Endothelial cell of umbilical vein (primary cell): ENCODE measurements at regions of chr5 and their contacts with region 1.

Region 1: DNA sequence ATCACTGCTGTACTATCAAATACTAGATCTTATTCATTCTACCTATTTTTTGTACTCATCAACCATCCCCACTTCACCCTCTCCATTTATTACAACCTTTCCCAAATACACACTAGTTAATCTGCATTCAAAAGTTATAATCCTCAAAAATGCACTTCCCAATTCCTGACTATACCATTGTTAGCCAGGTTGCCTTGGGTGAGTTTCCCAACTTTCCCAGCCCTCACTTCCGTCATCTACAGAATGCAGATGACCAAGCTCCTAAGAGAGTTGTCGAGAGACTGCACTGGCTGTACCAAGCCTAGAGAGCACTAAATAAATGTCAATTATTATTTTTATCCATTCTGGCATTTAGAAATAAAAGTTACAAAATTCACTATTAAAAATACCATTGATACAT is 11.5 kb downstream of the PLPP1 start:
- DNase-seq: no peak
- H3K4me3 ChIP-seq: no peak overlapping the region
- H3K27ac ChIP-seq: no peak overlapping the region
- H3K4me1 ChIP-seq: no peaks in the 10 kb centered on the region
- H3K27me3 ChIP-seq: no peaks in the 10 kb centered on the region
- CTCF ChIP-seq: no peak
- POLR2A ChIP-seq: no peak

Region 2: DNA sequence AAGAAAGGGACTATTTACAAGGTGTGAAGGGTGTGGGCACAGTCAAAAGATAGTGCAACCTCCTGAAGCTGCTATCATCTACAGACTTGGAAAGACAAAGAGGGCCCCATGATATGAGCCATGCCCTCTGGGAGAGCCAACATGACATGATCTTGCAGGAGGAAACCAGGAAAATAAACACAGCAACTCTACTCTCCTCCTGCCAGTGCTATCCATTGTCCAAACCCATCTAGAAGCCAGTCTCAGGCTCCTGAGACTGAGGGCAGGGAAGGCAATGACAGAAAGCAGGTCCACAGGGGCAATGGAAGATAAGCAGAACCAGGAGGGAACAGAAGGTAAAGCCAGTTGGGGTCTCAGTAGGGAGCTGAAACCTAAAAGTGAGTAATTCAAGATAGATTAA is 25.6 kb before region 1 on chr5:
- CTCF ChIA-PET with region 1: interaction called, 3 read pairs
- POLR2A ChIA-PET with region 1: no interaction called
- dilution Hi-C with region 1: no loop called
- intact Hi-C with region 1: loop called (anchors 1 kb)
- DNase-seq: no peak
- H3K4me3 ChIP-seq: no peak overlapping the region
- H3K27ac ChIP-seq: no peak overlapping the region
- H3K4me1 ChIP-seq: no peaks in the 10 kb centered on the region
- H3K27me3 ChIP-seq: no peaks in the 10 kb centered on the region
- CTCF ChIP-seq: no peak
- POLR2A ChIP-seq: no peak